Mucosa of descending colon (tissue), 3 donors: ENCODE measurements at regions of chr6 and their contacts with region 1.

Region 1: GRCh38 chr6:37029249-37029971 is 24.0 kb downstream of the FGD2 start:
- DNase-seq: peak; percentile 56 to 82 (median 60)
- ATAC-seq: peak; percentile 91
- H3K4me3 ChIP-seq: no peak overlapping the region
- H3K4me1 ChIP-seq: no peaks in the 10 kb centered on the region
- CTCF ChIP-seq: peak; percentile 42

Region 2: DNA sequence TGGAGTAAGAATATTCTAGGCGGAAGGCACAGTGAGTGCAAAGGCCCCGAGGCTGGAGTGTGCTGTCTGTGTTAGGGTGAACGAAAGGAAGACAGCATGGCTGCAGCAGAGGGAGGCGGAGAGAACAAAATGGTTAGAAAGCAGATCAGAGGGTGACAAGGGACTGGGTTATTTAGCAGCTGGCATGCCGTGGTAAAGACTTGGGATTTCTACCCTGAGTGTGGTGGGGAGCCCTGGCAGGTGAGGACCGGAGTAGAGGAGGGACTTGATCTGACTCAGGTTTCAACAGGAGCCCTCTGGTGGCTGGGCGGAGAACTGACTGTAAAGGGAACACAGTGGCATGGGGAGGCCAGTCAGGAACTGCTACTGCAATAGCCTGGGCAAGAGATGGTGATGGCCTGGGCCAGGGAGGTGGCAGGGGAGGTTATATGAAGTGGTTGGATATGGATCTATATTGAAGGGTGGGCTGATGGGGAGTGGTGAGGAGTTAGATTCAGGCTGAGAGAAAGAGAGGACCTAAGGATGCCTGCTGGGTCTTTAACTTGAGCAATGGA is 178.6 kb after region 1 on chr6:
- intact Hi-C with region 1: loop called (anchors 10 kb)
- DNase-seq: peak; percentile 90 to 93 (median 92)
- ATAC-seq: peak; percentile 84
- H3K4me3 ChIP-seq: no peak overlapping the region
- H3K4me1 ChIP-seq: peaks cover 17% of the 10 kb centered on the region
- CTCF ChIP-seq: peak; percentile 61

Region 3: DNA sequence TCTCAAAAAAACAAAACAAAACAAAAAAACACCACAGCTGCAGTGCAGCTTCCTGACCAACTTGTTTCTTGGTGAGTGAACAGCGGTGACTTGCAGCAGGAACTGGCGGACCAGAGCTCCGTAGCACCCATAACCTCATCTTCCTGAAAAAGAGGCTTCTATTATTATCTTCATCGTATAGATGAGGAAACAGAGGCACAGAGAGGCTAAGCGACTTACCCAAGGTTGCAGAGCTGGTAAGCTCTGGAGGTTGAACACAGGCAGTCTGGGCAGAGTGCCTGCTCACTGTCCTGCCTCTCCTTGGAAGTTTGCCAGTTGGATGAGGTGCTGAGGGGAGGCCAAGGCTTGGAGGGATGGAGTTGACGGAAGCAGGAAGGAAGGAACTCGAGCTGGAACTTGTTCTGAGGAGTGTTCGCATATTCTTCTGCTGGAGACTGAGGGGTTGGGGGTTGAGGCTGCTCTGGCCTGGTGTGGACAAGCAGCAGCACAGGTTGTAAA is 518.2 kb after region 1 on chr6:
- intact Hi-C with region 1: no loop called
- DNase-seq: no peak
- ATAC-seq: peak; percentile 56
- H3K4me3 ChIP-seq: no peak overlapping the region
- H3K4me1 ChIP-seq: no peaks in the 10 kb centered on the region
- CTCF ChIP-seq: no peak